ENCODE measurements at regions of chr10 and their contacts with region 1.

Region 1: DNA sequence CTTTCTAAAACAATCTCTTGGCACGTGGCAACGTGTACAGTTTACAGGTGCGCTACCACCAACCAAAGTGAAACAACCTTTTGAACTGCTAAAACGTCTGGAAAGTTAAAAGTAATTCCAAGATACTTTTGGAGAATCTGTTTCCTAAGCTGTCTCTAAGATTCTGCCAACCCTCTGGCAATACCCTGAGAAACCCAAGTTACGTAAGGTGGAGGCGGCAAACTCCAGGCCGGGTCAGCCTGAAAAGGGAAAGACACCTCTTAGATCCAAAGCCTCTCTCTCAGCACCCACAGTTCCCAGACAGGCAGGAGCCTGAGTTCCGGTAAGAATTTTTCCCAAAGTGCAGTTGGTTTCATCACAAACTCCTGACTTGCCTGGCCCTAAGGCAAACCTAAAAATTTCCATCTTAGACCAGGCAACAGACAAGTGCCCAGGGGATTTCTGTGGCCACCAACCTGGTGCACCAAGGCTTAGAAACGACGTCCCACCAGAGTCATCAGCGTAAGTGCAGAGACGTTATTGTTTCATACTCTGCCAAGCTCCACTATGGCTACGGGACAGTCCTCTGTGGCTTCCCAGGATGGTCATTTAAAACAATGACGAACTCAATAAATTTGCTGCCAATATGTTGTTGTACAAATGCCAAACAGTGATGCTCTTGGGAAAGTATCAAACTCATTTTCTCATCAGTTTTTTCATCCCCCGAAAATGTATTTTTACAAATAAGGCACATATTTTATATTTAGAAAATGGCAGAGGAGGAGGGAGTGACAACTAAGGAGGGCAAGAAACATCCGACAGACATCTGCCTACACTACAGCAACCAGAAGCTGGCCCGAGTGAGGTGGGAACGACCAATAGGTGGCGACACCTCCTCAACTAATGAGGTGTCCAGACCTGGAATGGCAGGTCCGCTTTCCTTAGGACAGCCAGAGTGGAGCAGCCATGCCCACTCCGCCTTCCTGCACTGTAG is 205.8 kb upstream of the FRMD4A start:
- DNase-seq: peak; percentile 86
- H3K4me3 ChIP-seq: no peak overlapping the region
- H3K27ac ChIP-seq: no peak overlapping the region
- H3K4me1 ChIP-seq: peaks cover 7% of the 10 kb centered on the region
- H3K27me3 ChIP-seq: no peaks in the 10 kb centered on the region
- CTCF ChIP-seq: peak; percentile 59

Region 2: DNA sequence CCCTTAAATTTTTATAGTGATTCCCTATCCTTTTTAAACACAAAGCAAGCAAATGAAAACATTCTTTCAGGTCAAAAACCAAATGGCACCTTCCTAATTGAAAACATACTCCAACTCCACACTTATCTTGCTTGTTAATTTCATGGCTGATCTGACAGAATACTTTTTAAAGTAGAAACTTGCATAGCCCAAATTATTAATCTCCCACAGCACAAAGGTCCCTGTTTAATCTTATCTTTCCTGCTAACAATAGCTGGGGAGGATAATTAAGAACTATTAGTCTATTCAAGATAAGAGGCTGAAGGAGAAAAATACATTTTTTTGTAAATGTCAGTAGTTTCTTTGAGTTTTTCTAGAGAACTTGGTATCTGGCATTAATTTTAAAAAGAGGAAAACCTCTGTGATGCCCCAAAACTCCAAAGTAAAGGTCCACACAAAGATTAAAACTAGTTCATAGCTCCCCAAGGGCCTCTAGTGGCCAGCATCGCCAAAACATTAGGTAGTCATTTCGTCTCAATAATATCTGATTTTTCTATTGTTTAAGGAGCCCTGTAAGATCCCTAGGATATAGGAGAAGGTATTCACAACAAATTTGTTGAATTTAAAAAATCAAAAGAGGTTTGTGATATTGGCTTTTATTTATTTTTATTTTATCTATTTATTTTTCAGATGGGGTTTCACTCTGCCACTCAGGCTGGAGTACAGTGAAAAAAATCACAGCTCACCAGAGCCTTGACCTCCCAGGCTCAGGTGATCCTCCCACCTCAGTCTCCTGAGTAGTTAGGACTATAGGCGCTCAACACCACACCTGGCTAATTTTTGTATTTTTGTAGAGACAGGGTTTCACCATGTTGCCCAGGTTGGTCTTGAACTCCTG is 286.6 kb after region 1 on chr10:
- intact Hi-C with region 1: loop called (anchors 5 kb)
- DNase-seq: peak; percentile 34
- H3K4me3 ChIP-seq: no peak overlapping the region
- H3K27ac ChIP-seq: no peak overlapping the region
- H3K4me1 ChIP-seq: no peaks in the 10 kb centered on the region
- H3K27me3 ChIP-seq: no peaks in the 10 kb centered on the region
- CTCF ChIP-seq: peak; percentile 49